ENCODE measurements at regions of chr12 and their contacts with region 1.

Region 1: DNA sequence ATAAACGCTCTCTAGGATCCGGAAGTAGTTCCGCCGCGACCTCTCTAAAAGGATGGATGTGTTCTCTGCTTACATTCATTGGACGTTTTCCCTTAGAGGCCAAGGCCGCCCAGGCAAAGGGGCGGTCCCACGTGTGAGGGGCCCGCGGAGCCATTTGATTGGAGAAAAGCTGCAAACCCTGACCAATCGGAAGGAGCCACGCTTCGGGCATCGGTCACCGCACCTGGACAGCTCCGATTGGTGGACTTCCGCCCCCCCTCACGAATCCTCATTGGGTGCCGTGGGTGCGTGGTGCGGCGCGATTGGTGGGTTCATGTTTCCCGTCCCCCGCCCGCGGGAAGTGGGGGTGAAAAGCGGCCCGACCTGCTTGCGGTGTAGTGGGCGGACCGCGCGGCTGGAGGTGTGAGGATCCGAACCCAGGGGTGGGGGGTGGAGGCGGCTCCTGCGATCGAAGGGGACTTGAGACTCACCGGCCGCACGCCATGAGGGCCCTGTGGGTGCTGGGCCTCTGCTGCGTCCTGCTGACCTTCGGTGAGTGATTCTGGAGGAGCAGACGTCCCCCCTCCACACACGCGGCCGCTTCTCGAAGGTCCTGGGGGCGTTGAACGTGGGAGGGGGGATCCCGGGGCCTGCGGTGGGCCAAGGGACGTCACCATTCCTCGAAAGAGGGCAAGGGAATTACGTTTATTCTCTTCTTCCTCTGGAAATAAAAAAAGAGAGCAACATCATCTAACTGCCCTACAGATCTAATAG is at the start of gene HSP90B1:
- DNase-seq: peak; percentile 95 to 100 (median 99)
- ATAC-seq: peak; percentile 84
- H3K4me3 ChIP-seq: peak within 1 kb of the TSS; percentile 76
- H3K4me3 Mint-ChIP-seq: peak within 1 kb of the TSS; percentile 84 to 99 (median 92)
- H3K27ac ChIP-seq: peak within 1 kb of the TSS; percentile 100
- H3K27ac Mint-ChIP-seq: peak within 1 kb of the TSS; percentile 97 to 100 (median 100)
- H3K4me1 ChIP-seq: peaks cover 36 to 45% of the 10 kb centered on the region in 2 donors
- H3K4me1 Mint-ChIP-seq: peaks cover 42 to 67% (median 53%) of the 10 kb centered on the region in 7 donors
- H3K27me3 ChIP-seq: no peaks in the 10 kb centered on the region
- H3K27me3 Mint-ChIP-seq: peaks cover 0 to 4% (median 0%) of the 10 kb centered on the region in 5 donors
- total RNA-seq, gene HSP90B1: 226 to 461 (median 436) TPM

Region 2: DNA sequence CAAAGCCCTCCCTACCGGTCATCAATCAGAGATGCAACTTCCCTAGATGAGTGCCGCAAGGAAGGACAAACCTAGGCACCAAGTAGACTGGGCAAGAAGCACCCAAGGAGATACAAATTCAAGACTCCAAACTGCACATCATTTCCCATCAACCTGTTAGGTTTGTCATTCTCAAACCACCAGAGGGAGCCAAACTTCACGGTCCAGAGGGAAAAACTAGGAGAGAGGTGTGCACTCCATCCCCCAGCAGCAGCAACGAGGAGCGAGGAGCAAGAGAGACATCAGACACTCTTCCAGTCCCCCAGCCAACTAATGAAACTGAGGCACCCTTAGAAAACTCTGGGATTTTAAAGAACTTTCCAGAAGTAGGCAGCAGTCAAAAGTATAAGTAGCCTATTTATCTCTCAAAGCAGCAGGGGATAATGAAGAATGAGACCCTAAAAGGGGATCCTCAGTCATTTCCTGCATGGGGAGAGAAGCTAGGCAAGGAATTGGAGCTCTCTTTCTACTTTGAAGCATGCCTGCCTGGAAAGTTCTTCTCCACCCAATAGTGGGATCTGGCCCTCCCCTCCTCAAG is 52.2 kb before region 1 on chr12:
- CTCF ChIA-PET with region 1: interaction called, 18 read pairs
- POLR2A ChIA-PET with region 1: interaction called, 23 read pairs
- intact Hi-C with region 1: loop called (anchors 1 kb)
- DNase-seq: peak in 8 of 9 donors; percentile 43 to 61 (median 54)
- ATAC-seq: peak; percentile 83
- H3K4me3 ChIP-seq: no peak overlapping the region
- H3K4me3 Mint-ChIP-seq: peak overlapping the region in 1 of 10 donors; percentile 8
- H3K27ac ChIP-seq: no peak overlapping the region
- H3K27ac Mint-ChIP-seq: peak overlapping the region in 3 of 9 donors; percentile 2 to 80 (median 23)
- H3K4me1 ChIP-seq: no peaks in the 10 kb centered on the region
- H3K4me1 Mint-ChIP-seq: peaks cover 0 to 28% (median 12%) of the 10 kb centered on the region in 7 donors
- H3K27me3 ChIP-seq: no peaks in the 10 kb centered on the region
- H3K27me3 Mint-ChIP-seq: peaks cover 0 to 5% (median 0%) of the 10 kb centered on the region in 5 donors

Region 3: DNA sequence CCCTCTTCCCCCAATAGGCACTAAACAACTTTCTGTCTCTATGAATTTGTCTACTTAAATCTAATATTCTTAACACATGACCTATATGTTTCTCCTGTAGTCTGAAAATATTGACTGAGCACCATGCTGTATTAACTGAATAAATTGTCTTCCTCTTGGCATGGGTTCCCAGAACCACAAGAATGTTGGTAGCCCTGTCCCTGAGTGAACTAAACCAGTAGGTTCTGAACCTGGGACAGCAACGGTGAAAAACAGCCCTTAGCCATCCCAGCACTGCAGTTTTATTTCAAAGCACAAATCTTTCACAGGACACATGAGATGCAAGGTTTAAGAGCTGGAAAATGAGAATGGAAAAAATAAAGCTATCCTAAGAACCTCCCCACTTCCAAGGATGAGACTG is 20.4 kb before region 1 on chr12:
- CTCF ChIA-PET with region 1: no interaction called
- POLR2A ChIA-PET with region 1: interaction called, 21 read pairs
- intact Hi-C with region 1: no loop called
- DNase-seq: no peak
- ATAC-seq: no peak
- H3K4me3 ChIP-seq: no peak overlapping the region
- H3K4me3 Mint-ChIP-seq: peak overlapping the region in 2 of 10 donors; percentile 25 to 38
- H3K27ac ChIP-seq: no peak overlapping the region
- H3K27ac Mint-ChIP-seq: peak overlapping the region in 4 of 9 donors; percentile 1 to 87 (median 66)
- H3K4me1 ChIP-seq: peaks cover 0 to 29% of the 10 kb centered on the region in 2 donors
- H3K4me1 Mint-ChIP-seq: peaks cover 8 to 47% (median 40%) of the 10 kb centered on the region in 7 donors
- H3K27me3 ChIP-seq: no peaks in the 10 kb centered on the region
- H3K27me3 Mint-ChIP-seq: peaks cover 0 to 6% (median 0%) of the 10 kb centered on the region in 5 donors

Region 4: GRCh38 chr12:103965590-103966504 is 35.6 kb after region 1 on chr12 and contains the start of gene TDG:
- CTCF ChIA-PET with region 1: interaction called, 8 read pairs
- POLR2A ChIA-PET with region 1: interaction called, 124 read pairs
- intact Hi-C with region 1: loop called (anchors 1 kb)
- DNase-seq: peak; percentile 81 to 97 (median 95)
- ATAC-seq: peak; percentile 97
- H3K4me3 ChIP-seq: peak within 1 kb of the TSS; percentile 87
- H3K4me3 Mint-ChIP-seq: peak within 1 kb of the TSS; percentile 92 to 99 (median 97)
- H3K27ac ChIP-seq: peak within 1 kb of the TSS; percentile 94
- H3K27ac Mint-ChIP-seq: peak within 1 kb of the TSS; percentile 96 to 100 (median 99)
- H3K4me1 ChIP-seq: peaks cover 31 to 41% of the 10 kb centered on the region in 2 donors
- H3K4me1 Mint-ChIP-seq: peaks cover 34 to 68% (median 57%) of the 10 kb centered on the region in 7 donors
- H3K27me3 ChIP-seq: no peaks in the 10 kb centered on the region
- H3K27me3 Mint-ChIP-seq: no peaks in the 10 kb centered on the region
- total RNA-seq, gene TDG: 21.5 to 43.0 (median 35.5) TPM

Region 5: GRCh38 chr12:104137913-104138796 is 207.9 kb after region 1 on chr12 and contains the start of gene NFYB:
- CTCF ChIA-PET with region 1: interaction called, 5 read pairs
- POLR2A ChIA-PET with region 1: interaction called, 32 read pairs
- intact Hi-C with region 1: loop called (anchors 1 kb)
- DNase-seq: peak; percentile 90 to 96 (median 94)
- ATAC-seq: peak; percentile 97
- H3K4me3 ChIP-seq: peak within 1 kb of the TSS; percentile 69
- H3K4me3 Mint-ChIP-seq: peak within 1 kb of the TSS; percentile 81 to 93 (median 90)
- H3K27ac ChIP-seq: peak within 1 kb of the TSS; percentile 72
- H3K27ac Mint-ChIP-seq: peak within 1 kb of the TSS; percentile 71 to 95 (median 89)
- H3K4me1 ChIP-seq: peaks cover 10 to 23% of the 10 kb centered on the region in 2 donors
- H3K4me1 Mint-ChIP-seq: peaks cover 0 to 22% (median 9%) of the 10 kb centered on the region in 7 donors
- H3K27me3 ChIP-seq: no peaks in the 10 kb centered on the region
- H3K27me3 Mint-ChIP-seq: peaks cover 0 to 24% (median 0%) of the 10 kb centered on the region in 5 donors
- total RNA-seq, gene NFYB: 11.6 to 25.9 (median 24.4) TPM

Region 6: DNA sequence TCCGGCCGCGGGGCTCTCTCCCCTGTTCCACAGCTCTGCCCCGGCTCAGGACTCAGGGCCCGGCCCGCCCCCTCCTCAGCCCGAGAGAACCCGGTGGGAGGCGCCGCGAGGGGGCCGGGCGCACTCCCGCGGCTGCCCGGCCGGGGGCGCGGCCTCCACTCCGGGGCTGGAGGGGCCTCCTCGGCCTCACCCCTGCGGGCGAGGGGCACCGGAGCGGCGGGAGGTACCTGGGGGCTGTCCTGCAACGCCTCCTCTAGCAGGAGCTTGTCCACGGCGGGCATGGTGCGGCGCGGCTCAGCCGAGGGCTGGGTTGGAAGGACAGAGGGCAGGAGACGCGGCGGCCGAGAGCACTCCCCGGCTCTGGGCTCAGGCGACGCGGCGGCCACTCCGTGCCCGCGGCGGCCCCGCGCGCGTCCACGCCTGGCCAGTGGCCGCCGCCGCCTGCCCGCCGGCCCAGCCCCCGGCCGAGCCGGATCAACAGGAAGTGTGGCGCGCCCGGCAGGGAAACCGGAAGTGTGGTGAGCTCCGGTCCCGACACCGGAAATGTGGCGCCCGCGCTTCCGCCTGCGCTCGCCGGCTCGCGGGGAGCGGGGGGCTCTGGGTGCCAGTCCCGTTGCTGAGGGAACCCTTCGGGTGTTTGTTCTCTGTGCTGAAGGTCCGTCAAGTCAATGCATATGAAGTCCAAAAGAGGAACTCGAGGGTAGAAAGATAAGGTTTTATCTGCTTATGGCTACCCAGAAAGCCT is 1305.7 kb after region 1 on chr12 and contains the start of gene APPL2:
- CTCF ChIA-PET with region 1: no interaction called
- POLR2A ChIA-PET with region 1: interaction called, 4 read pairs
- intact Hi-C with region 1: loop called (anchors 10 kb)
- DNase-seq: peak; percentile 52 to 81 (median 71)
- ATAC-seq: peak; percentile 86
- H3K4me3 ChIP-seq: peak within 1 kb of the TSS; percentile 71
- H3K4me3 Mint-ChIP-seq: peak within 1 kb of the TSS in 9 of 10 donors; percentile 89 to 95 (median 93)
- H3K27ac ChIP-seq: peak within 1 kb of the TSS; percentile 78
- H3K27ac Mint-ChIP-seq: peak within 1 kb of the TSS; percentile 86 to 96 (median 91)
- H3K4me1 ChIP-seq: peaks cover 25 to 39% of the 10 kb centered on the region in 2 donors
- H3K4me1 Mint-ChIP-seq: peaks cover 42 to 54% (median 48%) of the 10 kb centered on the region in 7 donors
- H3K27me3 ChIP-seq: no peaks in the 10 kb centered on the region
- H3K27me3 Mint-ChIP-seq: peaks cover 0 to 3% (median 0%) of the 10 kb centered on the region in 5 donors
- total RNA-seq, gene APPL2: 31.6 to 74.5 (median 58.3) TPM

Measured in naive thymus-derived CD4-positive, alpha-beta T cell (primary cell).